HEK293T (cell line): ENCODE measurements at regions of chr19 and their contacts with region 1.

Region 1: DNA sequence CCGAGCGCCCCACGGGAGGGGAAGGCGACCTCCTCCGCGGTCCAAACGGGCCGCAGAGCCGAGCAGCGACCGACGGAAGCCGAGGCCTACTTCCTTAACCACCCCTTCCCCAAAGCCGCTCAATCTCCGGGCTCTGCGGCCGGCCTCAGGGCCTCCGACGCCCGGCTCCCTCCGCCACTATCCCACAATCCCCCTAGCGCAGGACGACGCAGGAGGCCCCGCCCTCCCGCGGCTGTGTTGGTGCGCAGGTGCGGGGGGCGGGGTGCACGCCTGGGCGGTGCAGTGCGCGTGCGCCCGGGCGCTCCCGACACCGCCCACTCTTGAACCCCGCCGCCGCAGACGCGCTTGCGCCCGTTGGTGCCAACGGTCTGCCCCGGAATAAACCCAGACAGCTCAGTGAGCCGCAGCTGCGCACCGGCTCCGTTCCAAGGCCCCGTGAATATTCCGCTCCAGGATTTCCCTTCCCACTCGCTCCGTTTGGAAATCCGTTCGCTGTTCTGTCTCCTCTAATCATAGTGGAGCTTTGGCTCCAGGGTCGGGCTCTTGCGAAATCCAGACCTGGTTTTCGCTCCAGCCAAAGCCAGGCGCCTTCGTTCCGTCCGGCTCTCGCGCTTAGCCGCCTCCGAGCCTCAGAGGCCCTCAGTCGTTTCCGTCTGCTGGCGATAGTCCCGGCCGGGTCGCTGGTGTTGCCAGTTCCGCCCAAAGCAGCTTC is at the start of gene PPP6R1:
- DNase-seq: peak; percentile 99

Region 2: DNA sequence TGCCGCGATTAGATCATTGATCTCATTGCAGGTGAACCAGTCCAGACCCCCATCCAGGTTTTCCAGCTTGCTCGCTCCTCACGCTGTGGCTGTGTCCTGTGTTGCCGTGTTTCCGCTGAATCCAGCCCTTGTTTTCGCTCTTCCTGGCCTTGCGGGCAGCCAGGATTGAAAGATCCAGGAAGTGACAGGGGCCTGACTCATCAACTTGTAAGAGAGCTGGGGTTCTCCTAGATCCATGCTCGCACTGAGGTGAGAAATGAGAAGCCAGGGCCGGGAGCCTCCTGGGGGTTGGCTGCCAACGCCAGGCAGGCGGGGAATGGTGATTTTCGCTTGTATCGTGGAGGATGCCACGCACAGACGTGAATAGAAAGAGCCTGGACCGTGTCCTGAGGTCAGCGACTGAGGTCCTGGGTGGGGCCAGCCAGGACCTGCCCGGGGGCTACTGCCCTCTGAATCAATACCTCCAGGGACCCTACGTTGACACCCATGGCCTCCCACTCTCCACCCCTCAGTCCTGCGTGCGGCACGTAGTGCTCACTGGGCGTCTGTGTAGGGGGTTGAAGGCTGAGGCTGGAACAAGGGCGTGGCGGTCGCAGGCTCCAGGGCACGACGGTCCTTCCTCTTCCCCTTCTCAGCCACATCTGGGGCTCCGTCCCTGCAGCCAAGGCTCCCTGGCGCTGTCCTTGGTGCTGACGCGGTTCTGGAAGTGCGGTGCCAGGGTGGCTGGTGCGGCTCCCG is 42.4 kb before region 1 on chr19:
- CTCF ChIA-PET with region 1: no interaction called
- POLR2A ChIA-PET with region 1: interaction called, 25 read pairs
- DNase-seq: peak; percentile 84

Region 3: DNA sequence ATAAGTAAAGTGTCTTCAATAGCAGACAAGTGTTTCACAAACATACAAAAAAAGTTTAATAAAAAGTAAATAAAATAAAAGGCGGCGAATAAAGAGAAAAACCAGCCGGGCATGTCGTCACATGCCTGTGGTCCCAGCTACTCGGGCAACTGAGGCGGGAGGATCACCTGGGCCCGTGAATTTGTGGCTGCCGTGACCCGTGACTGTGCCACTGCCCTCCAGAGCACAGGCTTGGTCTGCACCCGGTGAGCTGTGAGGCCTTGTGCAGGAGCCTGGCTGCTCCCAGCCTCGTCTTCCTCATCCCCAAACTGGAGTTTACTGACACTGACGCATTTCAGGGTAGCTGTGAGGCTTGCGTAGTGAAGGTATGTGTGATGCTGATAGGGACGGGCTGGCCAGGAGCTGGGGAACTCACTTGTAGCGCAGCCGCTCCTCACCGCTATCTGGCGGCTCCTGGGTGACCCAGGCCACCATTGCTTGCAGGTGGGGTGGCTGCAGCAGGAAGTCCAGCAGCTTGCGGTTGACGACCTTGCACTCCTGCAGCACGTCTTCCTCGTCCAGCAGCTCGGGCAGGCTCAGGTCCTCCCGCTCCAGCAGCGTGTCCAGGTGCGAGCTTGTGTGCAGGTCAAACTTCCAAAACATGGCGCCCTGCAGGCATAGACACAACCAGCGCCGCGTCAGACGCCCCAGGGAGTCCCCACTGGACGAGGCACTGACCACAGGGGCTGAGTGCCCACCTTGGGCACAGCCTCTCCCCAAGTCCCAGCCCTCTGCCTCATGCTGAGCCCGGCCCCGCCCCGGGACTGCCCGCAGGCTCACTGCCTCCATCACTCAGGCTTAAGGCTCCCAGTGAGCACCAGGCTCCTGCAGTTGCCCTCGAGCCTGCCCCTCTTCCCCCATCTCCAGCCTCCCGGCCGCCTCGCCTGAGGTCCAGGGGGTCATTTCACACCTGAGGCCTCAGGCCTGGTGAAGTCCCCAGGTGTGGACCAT is 12.2 kb before region 1 on chr19:
- CTCF ChIA-PET with region 1: no interaction called
- POLR2A ChIA-PET with region 1: interaction called, 13 read pairs
- DNase-seq: no peak

Region 4: DNA sequence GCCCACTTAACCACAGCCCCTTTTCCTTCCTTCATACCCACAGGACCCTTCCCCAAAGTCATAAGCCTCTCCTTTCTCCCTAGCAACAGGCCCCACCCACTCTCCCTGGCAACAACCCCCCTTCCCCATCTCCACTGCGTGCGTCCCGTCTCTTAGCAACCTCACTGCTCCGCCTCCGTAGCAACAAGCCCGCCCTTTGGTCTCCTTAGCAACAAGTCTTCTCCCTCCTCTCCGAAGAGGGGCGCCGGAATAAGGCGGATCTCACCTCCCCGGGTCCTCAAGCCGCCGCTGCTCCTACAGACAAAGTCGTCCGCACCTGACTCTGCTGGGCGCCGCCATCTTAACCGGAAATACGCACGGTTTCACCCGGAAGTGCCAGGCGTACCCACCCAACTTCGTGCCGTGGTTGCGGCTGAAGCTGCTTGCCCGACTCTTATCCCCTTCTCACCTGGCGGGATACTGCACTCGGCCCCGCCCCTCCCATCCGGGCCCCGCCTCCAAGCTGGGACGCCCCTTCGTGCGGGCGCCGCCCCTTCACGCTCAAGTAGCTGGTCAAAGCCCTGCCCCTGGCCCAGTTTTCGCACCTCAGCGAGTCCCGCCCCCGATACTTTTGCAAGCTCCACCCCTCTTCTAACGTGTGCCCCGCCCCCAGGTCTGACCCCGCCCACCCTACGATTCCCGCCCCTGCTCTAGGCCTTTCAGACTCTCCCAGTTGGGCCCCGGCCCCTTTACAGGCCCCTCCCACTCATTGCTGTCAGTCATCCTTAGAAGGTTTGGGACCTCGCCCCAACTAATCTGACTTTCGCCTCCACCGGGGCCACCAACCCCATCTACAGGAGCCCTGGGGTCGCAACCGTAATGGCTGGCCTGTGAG is 21.0 kb after region 1 on chr19 and contains the start of gene HSPBP1:
- CTCF ChIA-PET with region 1: no interaction called
- POLR2A ChIA-PET with region 1: interaction called, 34 read pairs
- DNase-seq: peak; percentile 97

Region 5: DNA sequence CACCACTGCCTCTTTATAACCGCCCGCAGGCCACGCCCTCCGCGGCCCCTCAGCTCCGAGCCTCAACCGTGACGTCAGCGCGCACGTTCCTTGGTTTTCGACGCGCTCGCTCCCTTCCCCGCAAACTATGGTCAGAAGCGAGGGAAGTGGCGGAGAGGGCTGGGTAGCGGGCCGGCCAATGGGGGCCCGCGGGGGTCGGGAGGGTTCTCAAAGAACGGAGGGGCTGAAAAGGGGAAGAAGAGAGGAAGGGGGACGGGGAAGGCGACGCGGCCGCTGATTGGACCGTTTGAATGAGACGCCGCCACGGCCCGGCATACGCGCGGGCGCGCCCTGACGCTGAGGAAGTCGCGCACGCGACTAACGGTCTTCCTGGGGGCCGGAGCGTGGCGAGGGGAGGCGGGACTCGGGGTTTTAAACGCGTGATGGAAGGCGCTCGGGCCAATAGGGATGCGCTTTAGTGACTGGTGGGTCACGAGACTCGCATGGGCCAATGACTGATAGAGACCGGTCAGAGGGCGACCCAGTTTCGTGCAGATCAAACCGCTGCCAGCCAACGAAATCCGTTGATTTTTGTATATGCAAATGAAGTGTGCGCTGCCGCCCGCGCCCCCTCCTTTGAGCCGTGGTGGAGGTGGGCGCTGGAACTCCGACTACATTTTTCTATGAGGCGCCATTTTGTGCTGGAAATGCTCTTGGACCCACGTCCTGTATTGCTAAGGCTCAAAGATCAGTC is 149.0 kb after region 1 on chr19:
- CTCF ChIA-PET with region 1: no interaction called
- POLR2A ChIA-PET with region 1: interaction called, 15 read pairs
- DNase-seq: peak; percentile 97